Activated CD8-positive, alpha-beta T cell treated with anti-CD3 and anti-CD28 coated beads for 36 hours (primary cell): ENCODE measurements at regions of chr5 and their contacts with region 1.

Region 1: DNA sequence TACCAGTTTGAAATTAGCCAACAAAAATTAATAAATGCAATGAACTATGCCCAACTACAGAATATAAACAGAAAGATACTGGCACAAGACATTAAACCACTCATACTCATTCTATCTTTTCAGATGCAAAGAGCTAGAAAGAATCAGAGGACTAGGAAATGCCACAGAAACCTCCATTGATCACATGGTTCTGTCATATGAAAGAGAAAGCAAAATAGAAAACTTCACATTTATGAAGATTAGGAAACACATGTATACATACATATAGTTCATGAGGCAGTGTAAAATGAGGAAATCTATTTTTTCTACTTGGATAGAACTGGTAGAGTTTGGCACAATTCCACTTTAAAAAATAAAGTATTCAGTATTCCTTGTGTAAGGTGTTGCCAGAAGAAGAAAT is 275.1 kb upstream of the PTGER4 start:
- DNase-seq: no peak
- ATAC-seq: peak; percentile 43
- H3K4me3 Mint-ChIP-seq: peak overlapping the region; percentile 48
- H3K27ac Mint-ChIP-seq: peak overlapping the region; percentile 99
- H3K4me1 Mint-ChIP-seq: peaks cover 86% of the 10 kb centered on the region
- H3K27me3 Mint-ChIP-seq: no peaks in the 10 kb centered on the region
- CTCF ChIP-seq: no peak

Region 2: DNA sequence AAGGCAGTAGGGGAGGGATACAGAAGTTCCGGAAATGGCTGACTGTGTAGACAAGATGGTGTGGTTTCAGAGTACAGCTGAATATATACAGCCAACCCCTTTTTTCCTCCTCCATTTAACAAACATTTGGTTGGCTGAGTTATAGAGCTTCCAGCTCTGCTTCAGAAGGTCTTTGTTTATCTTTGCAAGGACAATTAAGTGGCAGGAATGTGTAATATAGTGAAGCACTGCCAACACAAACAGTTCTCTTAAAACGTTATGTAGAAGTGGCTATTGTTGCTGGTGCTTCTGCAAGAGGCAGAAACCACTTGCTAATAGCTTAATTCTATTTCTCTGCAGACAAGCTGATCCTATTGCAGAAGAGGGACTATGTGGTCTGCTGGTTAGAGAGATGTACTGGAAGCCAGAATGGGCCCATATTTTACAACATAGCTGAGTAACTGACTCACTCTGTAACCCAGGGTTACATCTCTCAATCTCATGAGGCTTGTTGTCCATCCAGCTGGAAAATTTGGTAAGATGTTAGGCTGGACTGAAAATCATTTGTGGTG is 1621.5 kb before region 1 on chr5:
- CTCF ChIA-PET with region 1: no interaction called
- POLR2A ChIA-PET with region 1: no interaction called
- intact Hi-C with region 1: no loop called
- DNase-seq: no peak
- ATAC-seq: no peak
- H3K4me3 Mint-ChIP-seq: no peak overlapping the region
- H3K27ac Mint-ChIP-seq: no peak overlapping the region
- H3K4me1 Mint-ChIP-seq: no peaks in the 10 kb centered on the region
- H3K27me3 Mint-ChIP-seq: peaks cover 15% of the 10 kb centered on the region
- CTCF ChIP-seq: no peak

Region 3: DNA sequence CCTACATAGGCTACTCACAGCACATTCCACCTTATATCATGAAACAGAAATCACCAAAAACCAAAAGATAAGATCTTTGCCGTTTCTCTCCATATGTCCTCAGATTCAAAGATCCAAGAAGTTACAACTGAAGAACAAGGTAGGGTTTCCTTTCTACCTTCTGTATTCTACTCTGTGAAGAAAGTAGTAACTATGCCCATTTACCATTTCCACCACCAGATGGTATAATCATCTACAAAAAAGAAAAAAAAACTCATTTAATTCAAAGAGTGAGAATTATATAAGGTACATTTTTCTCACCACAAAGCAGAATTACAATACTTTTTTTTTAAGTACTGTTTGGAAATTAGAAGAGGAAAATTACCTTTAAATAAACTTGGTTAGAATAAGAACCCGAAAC is 102.5 kb after region 1 on chr5:
- CTCF ChIA-PET with region 1: no interaction called
- POLR2A ChIA-PET with region 1: no interaction called
- intact Hi-C with region 1: no loop called
- DNase-seq: no peak
- ATAC-seq: peak; percentile 44
- H3K4me3 Mint-ChIP-seq: no peak overlapping the region
- H3K27ac Mint-ChIP-seq: no peak overlapping the region
- H3K4me1 Mint-ChIP-seq: peaks cover 15% of the 10 kb centered on the region
- H3K27me3 Mint-ChIP-seq: no peaks in the 10 kb centered on the region
- CTCF ChIP-seq: peak; percentile 40

Region 4: GRCh38 chr5:40570408-40571129 is 166.0 kb after region 1 on chr5:
- CTCF ChIA-PET with region 1: no interaction called
- POLR2A ChIA-PET with region 1: no interaction called
- intact Hi-C with region 1: loop called (anchors 10 kb)
- DNase-seq: no peak
- ATAC-seq: peak; percentile 93
- H3K4me3 Mint-ChIP-seq: no peak overlapping the region
- H3K27ac Mint-ChIP-seq: no peak overlapping the region
- H3K4me1 Mint-ChIP-seq: peaks cover 15% of the 10 kb centered on the region
- H3K27me3 Mint-ChIP-seq: no peaks in the 10 kb centered on the region
- CTCF ChIP-seq: no peak

Region 5: DNA sequence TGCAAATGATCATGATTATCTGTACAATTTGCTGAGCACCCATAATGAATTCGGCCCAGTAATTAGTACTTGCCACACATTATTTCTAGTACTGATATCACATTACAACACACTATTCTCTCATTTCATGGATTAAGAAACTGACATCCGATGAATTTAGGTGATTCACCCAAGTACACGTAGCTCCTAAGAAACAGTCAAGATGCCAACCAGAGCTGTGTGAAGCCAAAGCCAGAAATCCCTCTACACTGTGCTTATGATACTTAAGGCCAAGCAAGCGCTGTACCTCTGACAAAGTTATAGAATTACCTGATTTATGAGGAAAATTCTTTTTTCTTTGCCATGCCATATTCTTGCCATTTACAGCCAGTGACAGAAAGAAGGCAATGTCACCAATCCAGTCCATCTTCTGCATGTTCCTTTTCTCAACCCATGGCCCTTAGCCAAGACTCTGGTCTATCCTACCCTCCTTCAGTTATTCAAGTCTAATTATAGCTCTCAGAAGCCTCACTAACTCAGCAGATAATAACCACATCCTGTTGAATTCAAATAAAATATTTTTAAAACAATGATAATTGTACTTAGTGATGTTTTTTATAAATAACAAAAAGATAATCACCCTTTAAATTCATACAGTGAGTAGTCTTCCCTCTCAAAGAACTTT is 200.8 kb after region 1 on chr5:
- CTCF ChIA-PET with region 1: no interaction called
- POLR2A ChIA-PET with region 1: no interaction called
- intact Hi-C with region 1: no loop called
- DNase-seq: no peak
- ATAC-seq: peak; percentile 42
- H3K4me3 Mint-ChIP-seq: no peak overlapping the region
- H3K27ac Mint-ChIP-seq: peak overlapping the region; percentile 78
- H3K4me1 Mint-ChIP-seq: peaks cover 44% of the 10 kb centered on the region
- H3K27me3 Mint-ChIP-seq: no peaks in the 10 kb centered on the region
- CTCF ChIP-seq: no peak